ENCODE measurements at regions of chr6 and their contacts with region 1.

Region 1: GRCh38 chr6:41787219-41787917 is at the start of gene TOMM6:
- DNase-seq: peak; percentile 97 to 99
- ATAC-seq: peak; percentile 96
- H3K4me3 ChIP-seq: peak within 1 kb of the TSS; percentile 86 to 95
- H3K27ac ChIP-seq: peak within 1 kb of the TSS; percentile 74 to 89
- H3K4me1 ChIP-seq: no peaks in the 10 kb centered on the region
- H3K27me3 ChIP-seq: no peaks in the 10 kb centered on the region
- total RNA-seq, gene TOMM6: 74.8 to 75.5 TPM

Region 2: GRCh38 chr6:41705996-41706835 is 81.2 kb before region 1 on chr6:
- intact Hi-C with region 1: loop called in 1 of 2 experiments (anchors 2 kb)
- DNase-seq: peak; percentile 94
- ATAC-seq: peak; percentile 90
- H3K4me3 ChIP-seq: no peak overlapping the region
- H3K27ac ChIP-seq: peak overlapping the region; percentile 18 to 46
- H3K4me1 ChIP-seq: peaks cover 0 to 5% of the 10 kb centered on the region in 2 donors
- H3K27me3 ChIP-seq: no peaks in the 10 kb centered on the region

Region 3: DNA sequence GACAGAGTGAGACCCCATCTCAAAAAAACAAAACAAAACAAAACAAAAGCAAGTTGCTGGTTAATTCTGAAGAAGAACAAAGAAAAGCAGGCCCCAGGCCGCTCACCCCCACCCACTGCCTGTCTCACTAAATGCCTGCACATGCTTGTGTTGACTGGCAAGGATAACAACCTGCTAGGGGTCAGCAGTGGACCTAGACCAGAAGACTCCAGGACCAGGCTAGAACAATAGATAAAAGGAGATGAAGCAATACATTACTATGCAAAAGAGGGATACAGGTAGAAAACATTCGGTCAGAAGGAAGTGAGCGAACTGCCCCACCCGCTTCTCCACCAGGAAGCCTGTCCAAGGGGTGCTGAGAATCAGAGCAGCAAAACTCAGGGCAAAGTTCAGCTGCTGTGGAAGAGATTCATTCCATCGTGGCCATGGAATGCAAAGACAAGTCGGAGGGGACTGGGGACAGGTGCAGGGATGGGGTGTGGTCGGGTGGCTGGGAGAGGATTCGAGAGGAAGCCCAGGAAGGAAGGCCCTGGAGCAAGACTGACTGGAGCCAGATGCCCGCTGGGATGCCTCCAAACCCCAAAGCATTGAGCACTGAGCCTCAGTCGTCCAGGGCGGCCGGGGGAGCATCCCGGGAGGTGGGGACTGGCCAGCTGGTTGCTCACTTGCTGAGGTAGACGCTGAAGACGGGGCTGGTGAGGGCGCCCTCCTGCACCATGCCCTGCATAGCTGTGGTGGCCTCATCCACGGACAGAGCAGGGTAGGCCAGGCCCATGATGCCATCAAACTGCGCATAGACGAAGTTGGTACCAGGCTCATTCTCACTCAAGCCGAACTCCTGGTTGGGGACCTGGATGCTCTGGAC is 45.5 kb before region 1 on chr6:
- intact Hi-C with region 1: no loop called
- DNase-seq: peak in 1 of 2 donors; percentile 32
- ATAC-seq: no peak
- H3K4me3 ChIP-seq: no peak overlapping the region
- H3K27ac ChIP-seq: no peak overlapping the region
- H3K4me1 ChIP-seq: no peaks in the 10 kb centered on the region
- H3K27me3 ChIP-seq: no peaks in the 10 kb centered on the region

Region 4: DNA sequence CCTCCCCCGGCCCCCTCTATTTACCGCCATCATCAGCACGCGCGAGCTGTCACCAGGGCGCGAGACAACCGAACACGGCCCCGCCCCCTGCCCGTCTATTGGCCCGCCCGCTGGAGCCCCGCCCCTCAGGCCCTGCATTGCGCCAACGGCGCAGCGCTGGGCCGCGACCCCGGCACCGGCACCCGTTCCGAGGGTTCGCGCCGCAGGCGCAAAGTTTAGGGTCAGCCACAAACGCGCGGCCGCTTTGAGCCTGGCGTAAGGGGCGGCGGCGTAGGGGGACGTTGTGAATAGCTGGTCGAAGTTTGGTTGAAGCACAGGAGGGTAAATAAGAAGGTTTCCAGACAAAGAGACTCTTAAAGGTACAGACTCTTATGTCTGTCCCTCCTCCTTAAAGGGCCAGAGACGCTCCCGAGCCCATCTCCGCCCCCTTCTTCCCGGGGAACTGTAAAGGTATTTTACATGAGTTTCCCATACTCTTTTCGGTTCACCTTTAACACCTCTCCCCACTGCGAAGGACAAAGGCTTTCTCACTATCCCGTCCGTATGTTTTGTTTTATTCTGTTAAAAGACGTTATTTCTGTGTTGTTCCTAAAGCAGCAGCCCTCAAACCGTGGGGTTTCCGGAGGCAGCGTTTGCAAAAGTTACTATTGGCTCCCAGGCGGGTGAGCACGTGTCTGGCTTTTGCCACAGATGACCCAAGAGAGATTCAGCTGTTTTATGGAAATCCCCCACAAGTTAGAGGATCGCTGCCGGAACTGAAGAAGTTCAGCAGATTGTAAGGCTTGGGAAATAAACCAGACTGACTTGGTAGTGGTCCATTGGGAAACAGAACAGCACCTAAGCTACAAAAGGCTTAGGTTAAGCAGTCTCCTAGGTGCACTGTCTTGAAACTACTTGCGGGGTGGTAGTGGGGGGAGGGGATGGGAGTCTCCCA is 108.2 kb after region 1 on chr6 and contains the start of gene USP49:
- intact Hi-C with region 1: loop called in 1 of 2 experiments (anchors 10 kb)
- DNase-seq: peak; percentile 91 to 97
- ATAC-seq: peak; percentile 98
- H3K4me3 ChIP-seq: peak within 1 kb of the TSS; percentile 82 to 99
- H3K27ac ChIP-seq: peak within 1 kb of the TSS in 1 of 2 donors; percentile 41
- H3K4me1 ChIP-seq: peaks cover 0 to 2% of the 10 kb centered on the region in 2 donors
- H3K27me3 ChIP-seq: no peaks in the 10 kb centered on the region
- total RNA-seq, gene USP49: 2.3 to 5.3 TPM

Region 5: DNA sequence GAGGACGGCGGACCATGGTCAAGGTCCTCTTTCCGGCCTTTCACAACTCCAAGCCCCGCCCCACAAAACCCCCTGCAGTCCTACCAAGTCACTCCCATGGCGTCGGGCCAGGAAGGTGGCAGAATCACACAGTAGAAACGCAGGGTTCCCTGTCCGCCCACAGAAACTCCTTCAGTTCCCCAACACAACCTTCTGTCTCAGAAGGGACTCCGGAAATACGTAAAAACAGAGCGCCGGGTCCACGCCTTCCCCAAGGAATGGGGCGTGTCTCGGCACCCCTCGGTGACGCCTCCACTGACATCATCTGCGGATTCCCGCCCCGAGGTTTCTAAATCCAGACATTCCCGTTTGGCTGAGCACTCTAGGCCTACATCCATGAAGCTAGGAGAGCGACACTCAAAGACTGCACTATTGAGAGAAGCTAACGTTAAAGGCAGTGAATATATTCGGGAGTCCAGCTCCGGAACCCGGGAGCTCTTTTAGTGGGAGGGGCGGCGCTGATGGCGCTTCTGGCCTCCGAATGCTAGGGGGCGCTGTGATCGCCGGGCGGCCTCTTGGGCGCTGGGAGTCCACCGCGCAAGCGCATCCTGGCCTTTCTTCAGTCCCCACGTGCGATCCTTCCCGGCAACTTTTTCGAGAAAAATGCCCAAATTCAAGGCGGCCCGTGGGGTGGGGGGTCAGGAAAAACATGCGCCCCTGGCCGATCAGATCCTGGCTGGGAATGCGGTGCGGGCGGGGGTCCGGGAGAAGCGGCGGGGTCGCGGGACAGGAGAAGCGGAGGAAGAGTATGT is 133.7 kb after region 1 on chr6 and contains the starts of genes BYSL and MED20:
- intact Hi-C with region 1: loop called (anchors 1 kb)
- DNase-seq: peak; percentile 96 to 97
- ATAC-seq: peak; percentile 98
- H3K4me3 ChIP-seq: peak within 1 kb of the TSS; percentile 52 to 90
- H3K27ac ChIP-seq: peak within 1 kb of the TSS; percentile 17 to 89
- H3K4me1 ChIP-seq: peaks cover 0 to 7% of the 10 kb centered on the region in 2 donors
- H3K27me3 ChIP-seq: no peaks in the 10 kb centered on the region
- total RNA-seq, gene BYSL: 9.7 to 12.0 TPM
- total RNA-seq, gene MED20: 11.7 to 16.1 TPM

Region 6: GRCh38 chr6:42075159-42075838 is 287.9 kb after region 1 on chr6:
- intact Hi-C with region 1: no loop called
- DNase-seq: peak; percentile 77 to 89
- ATAC-seq: peak; percentile 73
- H3K4me3 ChIP-seq: no peak overlapping the region
- H3K27ac ChIP-seq: no peak overlapping the region
- H3K4me1 ChIP-seq: no peaks in the 10 kb centered on the region
- H3K27me3 ChIP-seq: no peaks in the 10 kb centered on the region

Region 7: DNA sequence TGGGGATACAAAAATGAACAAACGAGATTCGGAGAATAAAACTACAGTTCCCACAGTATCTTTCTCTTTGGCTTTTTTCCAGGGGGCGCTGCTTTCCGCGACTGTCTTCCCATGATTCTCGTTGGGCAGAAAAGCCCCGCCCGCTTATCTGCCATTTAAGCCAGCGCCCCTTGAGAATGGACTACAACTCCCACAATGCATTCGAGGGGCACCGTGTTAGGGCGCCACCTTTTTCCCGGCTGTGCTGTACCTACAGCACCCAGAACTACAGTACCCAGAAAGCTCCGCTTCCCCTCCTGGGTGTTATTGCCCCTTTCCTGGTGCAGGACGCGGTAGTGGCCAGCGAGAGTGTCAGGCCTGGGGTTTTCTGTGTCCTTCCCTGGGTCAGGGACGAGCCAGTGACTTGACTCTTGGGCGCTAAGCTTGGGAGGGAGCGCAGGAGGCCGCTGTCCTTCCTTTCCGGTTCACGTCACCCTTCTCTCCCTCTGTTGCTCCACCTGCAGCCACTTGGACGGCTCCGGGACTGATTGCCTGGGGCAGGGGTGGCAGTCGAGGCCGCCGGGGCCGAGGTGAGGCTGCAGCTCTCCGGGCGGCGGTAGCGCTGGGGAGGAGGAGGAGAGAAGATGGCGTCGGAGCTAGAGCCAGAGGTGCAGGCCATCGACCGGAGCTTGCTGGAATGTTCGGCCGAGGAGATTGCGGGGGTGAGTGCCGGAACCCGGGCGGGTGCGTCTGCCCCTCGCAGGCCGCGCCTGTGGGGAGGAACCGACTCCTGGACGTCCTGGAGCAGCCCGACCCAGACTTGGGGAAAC is 776.5 kb after region 1 on chr6 and contains the start of gene UBR2:
- intact Hi-C with region 1: loop called in 1 of 2 experiments (anchors 10 kb)
- DNase-seq: peak; percentile 95 to 98
- ATAC-seq: peak; percentile 98
- H3K4me3 ChIP-seq: peak within 1 kb of the TSS; percentile 70 to 78
- H3K27ac ChIP-seq: peak within 1 kb of the TSS; percentile 81 to 86
- H3K4me1 ChIP-seq: no peaks in the 10 kb centered on the region
- H3K27me3 ChIP-seq: no peaks in the 10 kb centered on the region
- total RNA-seq, gene UBR2: 30.8 to 38.8 TPM